ENCODE measurements at regions of chr15 and their contacts with region 1.

Region 1: DNA sequence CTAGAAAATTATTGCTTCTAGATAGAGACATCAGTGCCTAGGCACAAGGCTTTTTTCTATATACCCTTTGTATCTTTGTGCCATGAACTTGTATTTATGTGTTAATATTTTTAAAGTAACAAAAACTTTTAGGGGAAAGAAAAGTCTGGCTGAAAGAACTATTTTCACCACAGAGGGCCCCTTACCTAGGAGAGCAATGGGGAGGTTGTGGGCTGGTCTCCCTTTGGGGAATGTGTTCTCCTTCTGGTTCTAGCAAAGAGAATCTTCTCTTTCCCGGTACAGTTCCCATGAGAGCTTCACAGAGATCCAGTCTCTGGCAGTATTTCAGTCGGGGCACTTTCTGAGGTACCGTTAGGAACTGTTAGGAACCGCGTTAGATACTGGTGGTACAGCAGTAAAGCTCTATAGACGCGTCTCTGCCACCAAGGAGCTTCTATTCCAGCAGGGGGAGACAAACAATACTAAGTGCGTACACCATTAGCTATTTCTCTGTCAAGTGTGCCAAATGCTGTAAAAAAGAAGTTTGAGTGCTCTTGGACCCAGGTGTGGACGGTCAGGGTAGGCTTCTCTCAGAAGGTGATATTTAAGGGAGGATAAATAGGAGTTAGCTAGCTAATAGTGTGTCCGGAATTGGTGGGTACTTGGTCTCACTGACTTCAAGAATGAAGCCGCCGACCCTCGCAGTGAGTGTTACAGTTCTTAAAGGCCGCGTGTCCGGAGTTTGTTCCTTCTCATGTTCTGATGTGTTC is 4.6 kb upstream of the EPB42 start:
- DNase-seq: peak; percentile 45
- ATAC-seq: peak; percentile 99
- H3K4me3 ChIP-seq: no peak overlapping the region
- H3K27ac ChIP-seq: no peak overlapping the region
- H3K4me1 ChIP-seq: no peaks in the 10 kb centered on the region
- H3K27me3 ChIP-seq: no peaks in the 10 kb centered on the region
- CTCF ChIP-seq: peak; percentile 73 to 89 (median 76)
- EP300 ChIP-seq: no peak
- POLR2A ChIP-seq: no peak
- RAD21 ChIP-seq: peak; percentile 99

Region 2: GRCh38 chr15:43194795-43195194 is 30.6 kb before region 1 on chr15:
- CTCF ChIA-PET with region 1: interaction called, 21 read pairs
- POLR2A ChIA-PET with region 1: no interaction called
- RAD21 ChIA-PET with region 1: interaction called, 20 read pairs
- SMC1A ChIA-PET with region 1: interaction called, 16 read pairs
- in situ Hi-C with region 1: no loop called
- intact Hi-C with region 1: no loop called
- DNase-seq: no peak
- ATAC-seq: no peak
- H3K4me3 ChIP-seq: no peak overlapping the region
- H3K27ac ChIP-seq: no peak overlapping the region
- H3K4me1 ChIP-seq: no peaks in the 10 kb centered on the region
- H3K27me3 ChIP-seq: no peaks in the 10 kb centered on the region
- CTCF ChIP-seq: no peak
- EP300 ChIP-seq: no peak
- POLR2A ChIP-seq: no peak
- RAD21 ChIP-seq: no peak

Region 3: DNA sequence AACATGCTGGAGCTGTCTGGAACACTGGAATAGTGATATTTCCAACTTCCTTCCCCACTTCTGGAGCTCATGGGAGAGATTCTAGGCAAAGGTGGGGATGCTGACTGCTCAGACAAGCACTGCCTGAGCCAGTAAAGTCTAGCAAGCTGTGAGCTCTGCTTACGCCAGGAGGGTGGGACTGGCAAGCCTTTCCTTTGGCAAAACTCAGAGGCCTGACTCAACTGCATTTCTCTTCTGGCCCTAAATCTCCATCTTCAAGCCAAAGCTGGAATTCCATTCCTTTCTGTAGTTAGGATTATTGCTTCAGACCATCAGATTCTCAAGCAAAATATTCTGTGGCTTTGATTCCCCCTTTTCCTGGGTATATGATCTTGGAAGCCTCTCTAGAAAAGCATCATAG is 15.7 kb after region 1 on chr15:
- CTCF ChIA-PET with region 1: interaction called, 86 read pairs
- POLR2A ChIA-PET with region 1: interaction called, 7 read pairs
- RAD21 ChIA-PET with region 1: interaction called, 21 read pairs
- SMC1A ChIA-PET with region 1: interaction called, 36 read pairs
- in situ Hi-C with region 1: no loop called
- intact Hi-C with region 1: no loop called
- DNase-seq: no peak
- ATAC-seq: no peak
- H3K4me3 ChIP-seq: no peak overlapping the region
- H3K27ac ChIP-seq: no peak overlapping the region
- H3K4me1 ChIP-seq: peaks cover 17% of the 10 kb centered on the region
- H3K27me3 ChIP-seq: no peaks in the 10 kb centered on the region
- CTCF ChIP-seq: no peak
- EP300 ChIP-seq: no peak
- POLR2A ChIP-seq: no peak
- RAD21 ChIP-seq: no peak

Region 4: GRCh38 chr15:43260011-43260615 is 34.7 kb after region 1 on chr15:
- CTCF ChIA-PET with region 1: interaction called, 518 read pairs
- POLR2A ChIA-PET with region 1: interaction called, 4 read pairs
- RAD21 ChIA-PET with region 1: interaction called, 255 read pairs
- SMC1A ChIA-PET with region 1: interaction called, 311 read pairs
- in situ Hi-C with region 1: no loop called
- intact Hi-C with region 1: no loop called
- DNase-seq: no peak
- ATAC-seq: 0 out of 3 replicates have a peak, but pooled peaks have one; percentile 19
- H3K4me3 ChIP-seq: no peak overlapping the region
- H3K27ac ChIP-seq: no peak overlapping the region
- H3K4me1 ChIP-seq: no peaks in the 10 kb centered on the region
- H3K27me3 ChIP-seq: no peaks in the 10 kb centered on the region
- CTCF ChIP-seq: no peak
- EP300 ChIP-seq: no peak
- POLR2A ChIP-seq: no peak
- RAD21 ChIP-seq: no peak

Region 5: DNA sequence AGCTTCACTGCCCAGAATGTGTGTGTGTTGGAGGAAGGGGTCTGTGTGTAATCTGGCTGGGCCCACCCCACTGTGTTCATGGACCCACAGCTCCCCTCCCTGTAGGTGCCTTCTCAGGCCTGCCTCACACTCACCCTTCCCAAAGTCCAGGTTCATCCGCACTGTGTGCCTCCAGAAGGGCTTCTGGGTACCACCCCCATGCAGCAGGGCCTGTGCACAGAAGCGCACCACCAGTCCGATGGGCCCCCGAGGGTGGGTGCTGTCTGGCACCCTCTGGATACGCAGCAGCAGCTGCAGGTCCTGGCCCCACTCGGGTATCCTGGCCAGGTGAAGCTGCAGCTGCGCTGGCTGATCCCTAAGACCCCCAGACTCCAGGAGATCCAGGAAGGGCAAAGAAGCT is 54.1 kb after region 1 on chr15:
- CTCF ChIA-PET with region 1: interaction called, 518 read pairs
- POLR2A ChIA-PET with region 1: interaction called, 9 read pairs
- RAD21 ChIA-PET with region 1: interaction called, 201 read pairs
- SMC1A ChIA-PET with region 1: interaction called, 249 read pairs
- in situ Hi-C with region 1: loop called (anchors 10 kb)
- intact Hi-C with region 1: no loop called
- DNase-seq: no peak
- ATAC-seq: no peak
- H3K4me3 ChIP-seq: no peak overlapping the region
- H3K27ac ChIP-seq: no peak overlapping the region
- H3K4me1 ChIP-seq: no peaks in the 10 kb centered on the region
- H3K27me3 ChIP-seq: no peaks in the 10 kb centered on the region
- CTCF ChIP-seq: no peak
- EP300 ChIP-seq: no peak
- POLR2A ChIP-seq: no peak
- RAD21 ChIP-seq: no peak